Caco-2 (cell line): ENCODE measurements at regions of chr3 and their contacts with region 1.

Region 1: DNA sequence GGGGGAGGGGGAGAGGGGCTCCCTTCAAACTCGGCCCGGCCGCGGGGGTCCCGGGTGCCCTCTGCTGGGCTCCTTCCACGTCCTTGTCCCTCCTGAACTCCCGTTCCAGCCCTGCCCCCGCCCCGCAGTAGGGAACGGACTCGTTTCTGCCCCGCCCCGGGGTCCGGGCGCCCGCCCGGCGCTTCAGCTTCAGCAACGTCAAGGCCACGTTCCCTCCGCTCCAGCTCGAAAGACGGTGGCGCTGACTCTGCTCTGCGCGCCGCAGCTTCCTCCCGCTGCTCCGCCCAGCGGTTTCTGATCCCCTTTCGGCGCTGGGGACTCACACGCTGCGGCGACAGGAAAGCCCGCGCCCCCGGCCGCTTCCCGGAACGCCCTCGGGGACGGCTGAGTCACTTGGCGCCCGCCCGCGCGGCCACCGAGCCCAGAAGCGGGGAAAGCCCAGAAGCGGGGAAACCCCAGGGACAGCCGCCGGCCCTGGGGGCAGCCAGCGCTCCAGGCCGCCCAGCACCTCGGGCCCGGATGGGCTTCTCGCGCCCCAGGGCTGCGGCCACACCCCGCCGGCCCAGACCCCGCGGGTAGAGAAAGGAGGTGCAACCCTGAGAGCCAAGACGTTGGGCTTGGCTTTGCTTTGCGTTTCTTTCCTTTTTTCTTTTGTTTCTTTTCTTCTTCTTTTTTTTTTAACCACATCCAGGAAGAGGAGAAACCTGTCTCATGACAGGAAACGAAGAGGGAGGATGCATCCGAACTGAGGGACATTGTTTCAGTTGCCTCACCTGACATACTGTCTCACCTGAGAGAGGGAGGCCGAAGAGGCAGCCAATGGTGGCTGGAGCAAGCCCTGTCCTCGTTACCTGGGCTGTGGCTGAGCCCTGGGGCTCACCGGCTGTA is 28.9 kb downstream of the ARHGAP31 start:
- DNase-seq: peak; percentile 76 to 85
- H3K4me3 ChIP-seq: peak overlapping the region; percentile 58
- H3K4me3 Mint-ChIP-seq: peak overlapping the region; percentile 78
- H3K27ac Mint-ChIP-seq: peak overlapping the region; percentile 48
- H3K4me1 ChIP-seq: no peaks in the 10 kb centered on the region
- H3K4me1 Mint-ChIP-seq: no peaks in the 10 kb centered on the region
- H3K27me3 ChIP-seq: no peaks in the 10 kb centered on the region
- H3K27me3 Mint-ChIP-seq: no peaks in the 10 kb centered on the region
- CTCF ChIP-seq: peak; percentile 19 to 48

Region 2: GRCh38 chr3:119302697-119303551 is 20.2 kb before region 1 on chr3:
- CTCF ChIA-PET with region 1: interaction called, 3 read pairs
- POLR2A ChIA-PET with region 1: no interaction called
- intact Hi-C with region 1: loop called (anchors 2 kb)
- DNase-seq: no peak
- H3K4me3 ChIP-seq: no peak overlapping the region
- H3K4me3 Mint-ChIP-seq: no peak overlapping the region
- H3K27ac Mint-ChIP-seq: no peak overlapping the region
- H3K4me1 ChIP-seq: peaks cover 8% of the 10 kb centered on the region
- H3K4me1 Mint-ChIP-seq: peaks cover 9% of the 10 kb centered on the region
- H3K27me3 ChIP-seq: no peaks in the 10 kb centered on the region
- H3K27me3 Mint-ChIP-seq: no peaks in the 10 kb centered on the region
- CTCF ChIP-seq: no peak

Region 3: DNA sequence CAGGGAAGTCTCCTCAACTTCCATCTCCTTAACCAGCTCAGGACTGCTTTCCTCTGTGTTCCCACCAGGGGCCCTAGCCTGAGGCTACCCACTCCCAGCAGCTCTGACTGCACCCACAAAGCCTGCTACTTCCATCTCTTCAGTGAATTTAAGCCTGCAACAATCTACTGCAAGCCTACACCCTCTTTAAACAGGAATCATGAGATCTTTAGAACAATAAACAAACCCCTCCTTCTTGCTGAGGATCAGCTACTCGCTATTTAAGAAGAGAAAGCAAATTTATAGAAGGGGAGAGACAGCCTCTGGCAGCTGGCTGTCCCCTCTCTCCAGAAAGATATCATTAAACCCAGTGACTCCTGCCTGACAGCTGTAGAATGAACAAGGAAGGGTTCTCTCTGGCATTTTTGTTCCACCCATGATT is 23.0 kb after region 1 on chr3:
- CTCF ChIA-PET with region 1: no interaction called
- POLR2A ChIA-PET with region 1: interaction called, 4 read pairs
- intact Hi-C with region 1: loop called (anchors 1 kb)
- DNase-seq: peak in 1 of 2 experiments; percentile 14
- H3K4me3 ChIP-seq: no peak overlapping the region
- H3K4me3 Mint-ChIP-seq: no peak overlapping the region
- H3K27ac Mint-ChIP-seq: no peak overlapping the region
- H3K4me1 ChIP-seq: peaks cover 35% of the 10 kb centered on the region
- H3K4me1 Mint-ChIP-seq: peaks cover 33% of the 10 kb centered on the region
- H3K27me3 ChIP-seq: no peaks in the 10 kb centered on the region
- H3K27me3 Mint-ChIP-seq: no peaks in the 10 kb centered on the region
- CTCF ChIP-seq: peak in 1 of 2 experiments; percentile 5

Region 4: DNA sequence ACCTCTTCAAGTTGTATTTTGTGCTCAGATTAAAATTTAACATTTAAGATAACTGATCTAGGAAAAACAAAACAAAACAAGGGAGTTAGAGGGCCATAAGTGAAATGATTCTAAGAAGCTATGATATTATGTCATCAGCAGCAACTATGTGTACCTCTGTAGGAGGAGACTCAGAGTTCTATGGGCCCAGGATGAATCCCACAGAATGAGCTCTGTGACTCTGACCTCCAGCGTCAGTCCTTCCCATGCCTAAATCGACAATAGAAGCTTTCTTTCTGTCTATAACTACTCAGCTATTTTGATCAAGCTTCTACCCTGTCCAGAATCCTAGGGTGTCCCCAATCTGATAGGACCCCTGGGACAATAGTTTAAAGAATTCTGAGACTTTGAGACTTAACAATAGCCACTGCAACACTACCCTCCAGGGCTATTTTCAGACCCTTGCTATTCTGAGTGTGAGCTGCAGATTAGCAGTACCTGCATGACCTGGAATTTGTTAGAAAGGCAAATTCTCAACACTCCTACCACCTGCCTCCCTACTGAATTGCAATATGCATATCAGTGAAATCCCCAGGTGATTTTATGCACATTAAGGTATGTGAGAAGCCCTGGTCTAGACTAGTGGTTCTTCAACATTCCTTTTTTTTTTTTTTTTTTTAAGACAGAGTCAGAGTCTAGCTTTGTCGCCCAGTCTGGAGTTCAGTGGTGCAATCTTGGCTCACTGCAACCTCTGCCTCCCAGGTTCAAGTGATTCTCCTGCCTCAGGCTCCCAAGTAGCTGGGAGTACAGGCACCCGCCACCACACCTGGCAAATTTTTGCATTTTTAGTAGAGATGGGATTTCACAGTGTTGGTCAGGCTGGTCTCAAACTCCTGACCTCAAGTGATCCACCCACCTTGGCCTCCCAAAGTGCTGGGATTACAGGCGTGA is 37.9 kb after region 1 on chr3:
- CTCF ChIA-PET with region 1: no interaction called
- POLR2A ChIA-PET with region 1: interaction called, 12 read pairs
- intact Hi-C with region 1: no loop called
- DNase-seq: no peak
- H3K4me3 ChIP-seq: no peak overlapping the region
- H3K4me3 Mint-ChIP-seq: no peak overlapping the region
- H3K27ac Mint-ChIP-seq: no peak overlapping the region
- H3K4me1 ChIP-seq: no peaks in the 10 kb centered on the region
- H3K4me1 Mint-ChIP-seq: peaks cover 18% of the 10 kb centered on the region
- H3K27me3 ChIP-seq: no peaks in the 10 kb centered on the region
- H3K27me3 Mint-ChIP-seq: no peaks in the 10 kb centered on the region
- CTCF ChIP-seq: no peak

Region 5: DNA sequence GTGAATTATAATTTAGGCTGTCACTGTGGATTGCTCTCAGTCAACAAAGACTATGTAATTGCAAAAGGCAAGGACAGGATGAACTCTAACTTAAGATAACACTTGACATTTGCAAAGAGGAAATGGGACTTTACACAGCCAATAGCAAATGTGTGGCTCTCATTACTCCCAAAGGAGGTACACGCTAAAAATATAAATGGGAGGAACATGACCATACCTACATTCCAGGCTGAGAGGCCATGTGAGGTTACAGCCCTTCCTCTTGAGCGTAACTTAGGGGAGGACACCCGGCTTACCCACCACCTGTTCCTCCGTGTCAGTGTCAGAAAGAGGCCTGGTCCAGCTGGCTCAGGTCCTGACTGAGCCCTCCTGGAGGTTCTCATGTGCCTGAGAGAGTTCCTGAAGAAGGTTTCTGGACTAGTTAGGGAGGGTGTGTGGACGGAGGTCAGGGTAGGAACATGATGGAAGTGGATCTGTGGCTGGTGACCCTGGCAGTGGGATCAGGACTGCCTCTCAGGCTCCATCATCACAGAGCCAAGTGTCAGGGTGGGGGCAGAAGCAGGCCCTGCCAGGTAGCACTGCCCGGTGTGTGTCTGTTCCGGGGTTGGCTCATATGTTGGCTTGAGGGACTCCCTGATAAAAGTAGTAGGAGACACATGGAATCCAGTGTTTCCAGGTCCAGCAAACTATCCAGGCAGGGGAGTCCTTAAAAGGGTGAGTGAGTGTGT is 329.4 kb after region 1 on chr3:
- CTCF ChIA-PET with region 1: no interaction called
- POLR2A ChIA-PET with region 1: no interaction called
- intact Hi-C with region 1: no loop called
- DNase-seq: no peak
- H3K4me3 ChIP-seq: no peak overlapping the region
- H3K4me3 Mint-ChIP-seq: no peak overlapping the region
- H3K27ac Mint-ChIP-seq: no peak overlapping the region
- H3K4me1 ChIP-seq: no peaks in the 10 kb centered on the region
- H3K4me1 Mint-ChIP-seq: no peaks in the 10 kb centered on the region
- H3K27me3 ChIP-seq: no peaks in the 10 kb centered on the region; the same call in 1 of the 2 replicates
- H3K27me3 Mint-ChIP-seq: no peaks in the 10 kb centered on the region
- CTCF ChIP-seq: no peak

Region 6: GRCh38 chr3:120622870-120623731 is 1300.0 kb after region 1 on chr3:
- CTCF ChIA-PET with region 1: no interaction called
- POLR2A ChIA-PET with region 1: no interaction called
- intact Hi-C with region 1: no loop called
- DNase-seq: peak; percentile 40 to 55
- H3K4me3 ChIP-seq: no peak overlapping the region
- H3K4me3 Mint-ChIP-seq: no peak overlapping the region
- H3K27ac Mint-ChIP-seq: no peak overlapping the region
- H3K4me1 ChIP-seq: no peaks in the 10 kb centered on the region
- H3K4me1 Mint-ChIP-seq: no peaks in the 10 kb centered on the region
- H3K27me3 ChIP-seq: no peaks in the 10 kb centered on the region
- H3K27me3 Mint-ChIP-seq: no peaks in the 10 kb centered on the region
- CTCF ChIP-seq: peak; percentile 2 to 15